ENCODE measurements at regions of chr20 and their contacts with region 1.

Region 1: DNA sequence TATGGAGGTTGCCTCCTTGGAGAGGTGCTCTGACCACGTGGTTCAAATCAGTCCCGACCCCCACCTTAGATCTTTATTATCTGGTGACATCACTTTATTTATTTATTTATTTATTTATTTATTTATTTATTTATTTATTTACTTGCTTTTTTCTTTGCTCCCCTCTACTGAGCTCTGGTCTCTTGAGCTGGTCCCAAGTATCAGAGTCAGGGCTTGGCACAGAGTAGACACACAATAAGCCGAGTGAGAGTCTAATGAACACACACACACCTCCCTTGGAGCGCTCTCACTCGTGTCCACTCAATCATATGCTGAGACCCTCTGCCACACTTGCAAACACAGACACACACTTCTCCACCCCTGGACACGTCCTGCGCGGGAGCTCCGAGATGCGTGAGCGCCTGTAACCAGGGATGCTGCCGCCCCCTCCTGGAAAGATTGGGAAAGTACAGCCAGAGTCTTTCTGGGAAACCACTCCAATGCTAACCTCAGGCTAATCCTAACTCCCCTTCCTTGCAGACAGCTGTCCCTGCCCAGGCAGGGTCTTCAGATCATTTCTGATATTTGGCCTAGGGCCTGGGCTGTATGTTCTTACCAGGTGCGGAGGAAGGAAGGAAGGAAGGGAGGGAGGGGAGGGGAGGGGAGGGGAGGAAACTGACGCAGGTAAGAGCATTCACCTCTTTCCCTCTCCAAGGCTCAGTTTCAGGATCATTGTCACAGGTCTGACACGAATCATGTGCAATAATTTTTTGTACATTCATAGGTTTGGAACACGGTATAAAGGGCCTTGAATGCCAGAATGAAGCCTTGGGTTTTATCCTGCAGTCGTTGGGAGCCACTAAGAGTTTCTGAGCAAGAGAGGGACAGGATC is 70.9 kb downstream of the STK35 start:
- DNase-seq: peak; percentile 23 to 70 (median 51)
- ATAC-seq: peak; percentile 78
- H3K4me3 ChIP-seq: no peak overlapping the region
- H3K4me3 Mint-ChIP-seq: peak overlapping the region in 2 of 10 donors; percentile 23 to 29
- H3K27ac ChIP-seq: no peak overlapping the region
- H3K27ac Mint-ChIP-seq: no peak overlapping the region
- H3K4me1 ChIP-seq: no peaks in the 10 kb centered on the region
- H3K4me1 Mint-ChIP-seq: peaks cover 0 to 10% (median 4%) of the 10 kb centered on the region in 7 donors
- H3K27me3 ChIP-seq: no peaks in the 10 kb centered on the region
- H3K27me3 Mint-ChIP-seq: peaks cover 4 to 26% (median 14%) of the 10 kb centered on the region in 5 donors

Region 2: GRCh38 chr20:1802385-1803060 is 370.0 kb before region 1 on chr20:
- CTCF ChIA-PET with region 1: no interaction called
- POLR2A ChIA-PET with region 1: no interaction called
- intact Hi-C with region 1: loop called (anchors 1 to 5 kb)
- DNase-seq: peak in 6 of 9 donors; percentile 10 to 43 (median 21)
- ATAC-seq: peak; percentile 76
- H3K4me3 ChIP-seq: peak overlapping the region; percentile 20
- H3K4me3 Mint-ChIP-seq: peak overlapping the region; percentile 58 to 83 (median 72)
- H3K27ac ChIP-seq: no peak overlapping the region
- H3K27ac Mint-ChIP-seq: no peak overlapping the region
- H3K4me1 ChIP-seq: peaks cover 0 to 8% of the 10 kb centered on the region in 2 donors
- H3K4me1 Mint-ChIP-seq: peaks cover 6 to 21% (median 16%) of the 10 kb centered on the region in 7 donors
- H3K27me3 ChIP-seq: peaks cover 7 to 8% of the 10 kb centered on the region in 2 donors
- H3K27me3 Mint-ChIP-seq: peaks cover 53 to 75% (median 60%) of the 10 kb centered on the region in 5 donors

Region 3: DNA sequence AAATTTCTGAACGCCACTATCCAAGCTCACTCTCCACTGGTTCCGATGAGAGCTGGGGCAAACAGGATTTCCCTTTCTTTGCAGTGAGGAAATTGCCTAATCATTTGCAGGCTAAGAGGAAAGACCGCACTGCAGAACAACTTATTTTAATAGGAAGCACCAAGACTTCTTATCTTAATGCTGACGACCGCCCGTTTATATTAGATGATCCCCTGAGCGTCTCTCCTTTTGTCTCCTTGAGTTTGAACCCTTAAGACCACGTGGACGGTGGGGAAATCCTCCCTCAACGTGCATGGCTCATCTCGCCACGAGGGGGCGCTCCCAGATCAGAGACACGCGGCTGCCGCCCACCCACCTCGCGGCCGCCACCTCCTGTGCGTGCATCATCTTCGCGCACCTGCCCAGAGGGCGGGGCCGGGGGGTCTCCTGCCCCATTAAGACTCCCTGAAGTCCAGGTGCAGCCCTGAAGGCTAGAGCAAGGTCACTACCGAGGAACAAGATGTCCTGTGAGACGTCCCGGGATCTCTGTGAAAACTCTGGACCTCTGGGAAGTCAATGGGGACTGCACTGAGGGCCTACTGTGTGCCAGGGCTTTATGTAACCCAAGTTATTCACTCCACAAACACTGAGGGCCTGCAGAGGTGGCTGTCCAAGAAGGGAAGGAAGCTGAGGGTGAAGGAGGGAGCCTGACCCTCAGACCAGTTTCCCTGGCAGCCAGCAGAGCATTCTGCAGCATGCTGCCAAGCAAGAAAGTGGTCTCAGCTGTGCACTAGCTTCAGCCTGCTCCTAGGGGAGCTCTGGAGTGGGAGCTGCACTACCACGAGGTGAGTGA is 206.8 kb before region 1 on chr20:
- CTCF ChIA-PET with region 1: interaction called, 43 read pairs
- POLR2A ChIA-PET with region 1: no interaction called
- intact Hi-C with region 1: loop called in 1 of 2 experiments (anchors 1 kb)
- DNase-seq: peak; percentile 34 to 85 (median 62)
- ATAC-seq: peak; percentile 80
- H3K4me3 ChIP-seq: no peak overlapping the region
- H3K4me3 Mint-ChIP-seq: peak overlapping the region in 9 of 10 donors; percentile 33 to 72 (median 62)
- H3K27ac ChIP-seq: no peak overlapping the region
- H3K27ac Mint-ChIP-seq: no peak overlapping the region
- H3K4me1 ChIP-seq: no peaks in the 10 kb centered on the region
- H3K4me1 Mint-ChIP-seq: peaks cover 4 to 9% (median 7%) of the 10 kb centered on the region in 7 donors
- H3K27me3 ChIP-seq: no peaks in the 10 kb centered on the region
- H3K27me3 Mint-ChIP-seq: peaks cover 14 to 41% (median 28%) of the 10 kb centered on the region in 5 donors

Region 4: DNA sequence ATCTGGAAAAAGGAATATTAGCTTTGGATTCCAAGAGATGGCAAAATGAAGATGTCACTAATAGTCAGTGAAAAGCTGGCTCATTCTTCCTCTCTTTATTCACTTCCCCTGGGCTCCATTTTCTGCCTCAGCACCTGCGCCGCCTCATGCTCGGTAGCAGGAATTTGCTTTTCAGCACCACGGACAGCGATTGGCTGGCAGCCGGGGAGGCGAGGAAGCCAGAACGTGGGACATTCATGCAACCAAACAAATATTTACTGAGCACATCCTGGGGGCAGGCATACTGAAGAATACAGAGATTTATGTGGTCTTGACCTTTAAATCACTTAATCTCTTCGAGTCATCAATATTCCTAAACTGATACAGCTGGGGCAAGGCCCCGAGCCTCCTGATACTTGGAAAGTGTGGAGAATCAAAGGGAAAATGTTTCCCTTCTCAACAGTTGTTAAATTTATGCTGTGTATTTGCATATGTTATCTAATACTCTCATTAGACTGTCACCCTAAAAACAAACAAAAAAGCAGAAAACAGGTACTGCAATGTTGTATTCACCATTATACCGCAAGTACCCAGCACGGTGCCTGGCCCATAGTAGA is 166.6 kb before region 1 on chr20:
- CTCF ChIA-PET with region 1: interaction called, 4 read pairs
- POLR2A ChIA-PET with region 1: no interaction called
- intact Hi-C with region 1: loop called (anchors 1 kb)
- DNase-seq: peak; percentile 14 to 70 (median 46)
- ATAC-seq: no peak
- H3K4me3 ChIP-seq: no peak overlapping the region
- H3K4me3 Mint-ChIP-seq: no peak overlapping the region
- H3K27ac ChIP-seq: no peak overlapping the region
- H3K27ac Mint-ChIP-seq: no peak overlapping the region
- H3K4me1 ChIP-seq: no peaks in the 10 kb centered on the region
- H3K4me1 Mint-ChIP-seq: no peaks in the 10 kb centered on the region
- H3K27me3 ChIP-seq: peaks cover 0 to 3% of the 10 kb centered on the region in 2 donors
- H3K27me3 Mint-ChIP-seq: peaks cover 2 to 47% (median 36%) of the 10 kb centered on the region in 5 donors

Region 5: DNA sequence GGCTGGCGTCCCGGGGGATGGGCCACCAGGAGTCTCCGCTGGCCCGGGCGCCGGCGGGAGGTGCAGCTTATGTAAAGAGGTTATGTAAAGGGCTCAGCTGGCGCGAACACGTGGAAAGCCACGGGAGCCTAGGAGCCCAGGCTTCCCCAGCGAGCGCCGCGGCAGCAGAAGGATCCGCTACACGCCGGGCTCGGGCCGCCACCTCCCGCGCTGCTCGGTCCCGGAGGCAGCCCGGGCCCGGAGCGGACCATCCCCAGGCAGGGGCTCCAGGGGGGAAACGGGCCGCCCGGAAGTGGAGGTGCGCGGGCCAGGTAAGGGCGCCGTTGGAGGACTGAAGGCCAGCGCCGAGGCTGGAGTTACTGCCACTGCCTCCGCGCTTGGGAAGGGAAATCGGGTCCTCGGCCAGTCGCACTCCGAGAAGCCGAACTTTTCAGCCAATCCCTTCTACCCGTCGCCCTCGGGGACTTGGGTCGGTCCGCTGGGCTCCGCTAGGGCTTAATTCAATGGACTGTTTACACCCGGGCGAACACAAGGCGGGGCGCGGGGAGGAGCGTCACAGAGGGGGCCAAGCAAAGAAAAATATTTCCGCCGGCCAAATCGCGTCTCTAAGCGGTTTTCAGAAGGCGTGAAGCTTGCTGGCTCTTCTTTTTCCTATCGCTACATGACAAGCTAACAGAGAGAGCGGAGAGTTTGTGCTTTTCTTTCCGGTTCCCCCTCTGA is 70.5 kb before region 1 on chr20:
- CTCF ChIA-PET with region 1: interaction called, 3 read pairs
- POLR2A ChIA-PET with region 1: no interaction called
- intact Hi-C with region 1: loop called in 1 of 2 experiments (anchors 2 kb)
- DNase-seq: peak; percentile 82 to 94 (median 92)
- ATAC-seq: peak; percentile 88
- H3K4me3 ChIP-seq: peak overlapping the region; percentile 88
- H3K4me3 Mint-ChIP-seq: peak overlapping the region; percentile 90 to 97 (median 96)
- H3K27ac ChIP-seq: peak overlapping the region; percentile 96
- H3K27ac Mint-ChIP-seq: peak overlapping the region; percentile 99 to 100 (median 100)
- H3K4me1 ChIP-seq: peaks cover 29 to 38% of the 10 kb centered on the region in 2 donors
- H3K4me1 Mint-ChIP-seq: peaks cover 36 to 58% (median 44%) of the 10 kb centered on the region in 7 donors
- H3K27me3 ChIP-seq: no peaks in the 10 kb centered on the region
- H3K27me3 Mint-ChIP-seq: peaks cover 0 to 4% (median 0%) of the 10 kb centered on the region in 5 donors

Region 6: GRCh38 chr20:2162125-2162822 is 10.3 kb before region 1 on chr20:
- CTCF ChIA-PET with region 1: interaction called, 12 read pairs
- POLR2A ChIA-PET with region 1: no interaction called
- intact Hi-C with region 1: no loop called
- DNase-seq: no peak
- ATAC-seq: no peak
- H3K4me3 ChIP-seq: no peak overlapping the region
- H3K4me3 Mint-ChIP-seq: no peak overlapping the region
- H3K27ac ChIP-seq: no peak overlapping the region
- H3K27ac Mint-ChIP-seq: no peak overlapping the region
- H3K4me1 ChIP-seq: no peaks in the 10 kb centered on the region
- H3K4me1 Mint-ChIP-seq: no peaks in the 10 kb centered on the region
- H3K27me3 ChIP-seq: no peaks in the 10 kb centered on the region
- H3K27me3 Mint-ChIP-seq: no peaks in the 10 kb centered on the region

Measured in naive thymus-derived CD4-positive, alpha-beta T cell (primary cell).